Vagina (tissue), 2 donors: ENCODE measurements at regions of chr5 and their contacts with region 1.

Region 1: DNA sequence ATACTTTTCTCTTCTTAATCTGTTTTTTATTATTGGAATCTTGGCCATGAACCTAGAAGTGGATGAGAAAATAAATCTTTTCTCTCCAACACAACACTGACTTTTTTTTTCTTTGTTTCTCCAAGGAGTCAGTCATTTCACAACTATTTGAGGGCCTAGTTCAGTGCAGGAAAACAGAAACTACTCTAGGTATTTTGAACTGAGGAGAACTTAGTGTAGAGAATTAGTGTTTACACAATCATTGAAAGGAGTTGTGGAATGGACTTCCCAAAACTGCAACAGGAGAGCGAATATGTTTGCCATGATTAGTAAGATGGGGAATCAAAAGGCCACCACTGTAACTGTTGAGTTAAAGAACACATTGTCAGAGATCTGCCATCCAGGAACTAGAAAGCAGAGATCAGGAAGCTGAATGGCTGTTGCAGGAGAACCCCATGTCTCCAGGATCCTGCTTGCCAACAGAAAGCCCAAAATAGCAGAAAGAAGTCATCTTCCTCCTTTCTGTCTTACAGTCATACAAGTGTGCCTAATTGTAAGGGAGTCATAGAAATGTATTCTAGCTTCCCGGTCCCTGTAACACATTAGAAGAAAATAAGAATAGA is 20.3 kb upstream of the PCDH1 start:
- DNase-seq: no peak
- H3K4me3 ChIP-seq: no peak overlapping the region
- H3K27ac ChIP-seq: no peak overlapping the region
- H3K4me1 ChIP-seq: no peaks in the 10 kb centered on the region
- H3K27me3 ChIP-seq: no peaks in the 10 kb centered on the region
- CTCF ChIP-seq: no peak
- POLR2A ChIP-seq: no peak

Region 2: GRCh38 chr5:141846031-141846430 is 52.5 kb before region 1 on chr5:
- intact Hi-C with region 1: no loop called
- DNase-seq: no peak
- H3K4me3 ChIP-seq: no peak overlapping the region
- H3K27ac ChIP-seq: peak overlapping the region; percentile 19
- H3K4me1 ChIP-seq: peaks cover 46% of the 10 kb centered on the region
- H3K27me3 ChIP-seq: no peaks in the 10 kb centered on the region
- CTCF ChIP-seq: no peak
- POLR2A ChIP-seq: no peak

Region 3: DNA sequence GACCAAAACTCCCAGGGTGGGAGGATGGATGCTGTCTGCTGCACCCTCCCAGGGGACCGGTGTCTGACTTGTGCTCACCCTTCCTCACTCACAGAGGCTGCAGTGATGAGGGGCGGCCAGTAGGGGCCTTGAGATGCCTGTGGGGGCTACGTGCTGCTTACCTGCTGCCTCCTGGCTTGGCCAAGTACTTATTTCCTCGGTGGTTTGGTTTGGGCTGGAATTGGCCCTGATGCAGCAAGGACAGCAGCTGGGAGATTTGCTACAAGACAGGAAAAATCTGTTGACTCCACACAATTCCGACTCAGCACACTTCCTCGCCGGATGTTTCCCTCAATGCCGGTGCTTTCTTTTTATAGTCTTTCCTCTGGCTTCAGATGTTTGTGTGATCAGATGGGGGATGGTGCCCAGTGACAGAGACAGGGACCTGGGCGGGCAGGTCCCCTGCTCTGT is 52.8 kb after region 1 on chr5:
- intact Hi-C with region 1: no loop called
- DNase-seq: no peak
- H3K4me3 ChIP-seq: no peak overlapping the region
- H3K27ac ChIP-seq: no peak overlapping the region
- H3K4me1 ChIP-seq: peaks cover 2% of the 10 kb centered on the region
- H3K27me3 ChIP-seq: no peaks in the 10 kb centered on the region
- CTCF ChIP-seq: no peak
- POLR2A ChIP-seq: no peak

Region 4: GRCh38 chr5:141968914-141969608 is 70.5 kb after region 1 on chr5 and contains the start of gene RNF14:
- intact Hi-C with region 1: loop called (anchors 10 kb)
- DNase-seq: no peak
- H3K4me3 ChIP-seq: peak within 1 kb of the TSS; percentile 72 to 84
- H3K27ac ChIP-seq: peak within 1 kb of the TSS; percentile 96
- H3K4me1 ChIP-seq: peaks cover 25% of the 10 kb centered on the region
- H3K27me3 ChIP-seq: no peaks in the 10 kb centered on the region
- CTCF ChIP-seq: peak; percentile 78 to 98 (median 84)
- POLR2A ChIP-seq: peak in 1 of 2 donors; percentile 83
- total RNA-seq, gene RNF14: 37.8 TPM